K562 (cell line): ENCODE measurements at regions of chr4 and their contacts with region 1.

Region 1: GRCh38 chr4:189912170-189912569 is 28.5 kb upstream of the FRG1 start:
- DNase-seq: peak in 1 of 4 experiments; percentile 13
- ATAC-seq: no peak
- H3K4me3 ChIP-seq: no peak overlapping the region
- H3K27ac ChIP-seq: no peak overlapping the region
- H3K4me1 ChIP-seq: peaks cover 0 to 2% of the 10 kb centered on the region in 2 experiments; a peak in 1 of 5 replicates
- H3K27me3 ChIP-seq: no peaks in the 10 kb centered on the region
- CTCF ChIP-seq: peak; percentile 44 to 47 (median 47); a peak in 5 of 6 replicates
- EP300 ChIP-seq: no peak
- POLR2A ChIP-seq: no peak
- RAD21 ChIP-seq: peak in 1 of 2 experiments; percentile 22; a peak in 1 of 4 replicates

Region 2: GRCh38 chr4:189341881-189342280 is 570.3 kb before region 1 on chr4:
- CTCF ChIA-PET with region 1: no interaction called
- POLR2A ChIA-PET with region 1: no interaction called
- in situ Hi-C with region 1: no loop called
- intact Hi-C with region 1: no loop called
- DNase-seq: no peak
- ATAC-seq: no peak
- H3K4me3 ChIP-seq: no peak overlapping the region
- H3K27ac ChIP-seq: no peak overlapping the region
- H3K4me1 ChIP-seq: no peaks in the 10 kb centered on the region
- H3K27me3 ChIP-seq: no peaks in the 10 kb centered on the region
- CTCF ChIP-seq: no peak
- EP300 ChIP-seq: no peak
- POLR2A ChIP-seq: no peak
- RAD21 ChIP-seq: no peak

Region 3: DNA sequence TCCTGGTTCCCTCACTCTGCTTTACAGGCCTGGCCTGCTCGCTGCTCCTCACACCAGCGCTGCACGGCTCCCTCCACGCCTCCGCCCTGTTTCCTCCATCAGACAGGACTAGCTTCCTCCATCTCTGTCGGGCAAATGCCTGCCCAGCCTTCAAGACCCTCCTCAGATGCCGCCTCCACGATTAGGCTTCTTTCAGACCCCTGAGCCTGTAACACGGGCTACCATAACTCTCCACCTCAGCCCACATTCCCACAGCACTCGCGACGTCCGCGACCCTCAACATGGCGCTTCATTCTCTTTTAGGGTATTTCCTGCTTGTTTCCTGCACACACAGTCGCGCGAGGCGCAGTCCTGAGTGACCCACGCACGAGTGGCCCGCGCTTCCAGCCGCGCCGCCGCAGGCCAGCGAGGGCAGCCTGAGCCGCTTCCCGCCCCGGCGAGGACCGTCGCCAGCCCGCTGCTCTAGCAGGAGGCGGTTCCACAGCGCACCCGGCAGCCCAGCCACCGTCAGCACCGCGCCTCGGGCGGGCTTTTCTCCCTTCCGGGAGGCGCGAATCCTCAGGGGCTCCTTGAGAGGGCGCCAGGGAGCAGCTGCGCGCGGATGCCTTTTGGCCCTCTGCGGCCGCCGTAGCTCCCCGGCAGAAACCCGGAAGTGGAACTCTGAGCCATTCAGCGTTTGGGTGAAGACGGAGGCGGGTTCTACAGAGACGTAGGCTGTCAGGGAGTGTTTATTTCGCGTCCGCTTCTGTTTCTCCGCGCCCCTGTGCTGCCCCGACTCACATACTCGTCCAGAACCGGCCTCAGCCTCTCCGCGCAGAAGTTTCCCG is 28.2 kb after region 1 on chr4 and contains the start of gene FRG1:
- CTCF ChIA-PET with region 1: no interaction called
- POLR2A ChIA-PET with region 1: no interaction called
- in situ Hi-C with region 1: no loop called
- intact Hi-C with region 1: loop called (anchors 2 kb)
- DNase-seq: peak; percentile 86 to 95 (median 88)
- ATAC-seq: peak; percentile 99
- H3K4me3 ChIP-seq: peak within 1 kb of the TSS; percentile 74
- H3K27ac ChIP-seq: peak within 1 kb of the TSS; percentile 89
- H3K4me1 ChIP-seq: peaks cover 0 to 8% of the 10 kb centered on the region in 2 experiments; a peak in 2 of 5 replicates
- H3K27me3 ChIP-seq: no peaks in the 10 kb centered on the region
- CTCF ChIP-seq: peak; percentile 95 to 99 (median 96)
- EP300 ChIP-seq: no peak
- POLR2A ChIP-seq: peak; percentile 82
- RAD21 ChIP-seq: peak in 1 of 2 experiments; percentile 40; a peak in 3 of 4 replicates
- polyA plus RNA-seq, gene FRG1: 158 to 203 TPM